ENCODE measurements at regions of chr4 and their contacts with region 1.

Region 1: DNA sequence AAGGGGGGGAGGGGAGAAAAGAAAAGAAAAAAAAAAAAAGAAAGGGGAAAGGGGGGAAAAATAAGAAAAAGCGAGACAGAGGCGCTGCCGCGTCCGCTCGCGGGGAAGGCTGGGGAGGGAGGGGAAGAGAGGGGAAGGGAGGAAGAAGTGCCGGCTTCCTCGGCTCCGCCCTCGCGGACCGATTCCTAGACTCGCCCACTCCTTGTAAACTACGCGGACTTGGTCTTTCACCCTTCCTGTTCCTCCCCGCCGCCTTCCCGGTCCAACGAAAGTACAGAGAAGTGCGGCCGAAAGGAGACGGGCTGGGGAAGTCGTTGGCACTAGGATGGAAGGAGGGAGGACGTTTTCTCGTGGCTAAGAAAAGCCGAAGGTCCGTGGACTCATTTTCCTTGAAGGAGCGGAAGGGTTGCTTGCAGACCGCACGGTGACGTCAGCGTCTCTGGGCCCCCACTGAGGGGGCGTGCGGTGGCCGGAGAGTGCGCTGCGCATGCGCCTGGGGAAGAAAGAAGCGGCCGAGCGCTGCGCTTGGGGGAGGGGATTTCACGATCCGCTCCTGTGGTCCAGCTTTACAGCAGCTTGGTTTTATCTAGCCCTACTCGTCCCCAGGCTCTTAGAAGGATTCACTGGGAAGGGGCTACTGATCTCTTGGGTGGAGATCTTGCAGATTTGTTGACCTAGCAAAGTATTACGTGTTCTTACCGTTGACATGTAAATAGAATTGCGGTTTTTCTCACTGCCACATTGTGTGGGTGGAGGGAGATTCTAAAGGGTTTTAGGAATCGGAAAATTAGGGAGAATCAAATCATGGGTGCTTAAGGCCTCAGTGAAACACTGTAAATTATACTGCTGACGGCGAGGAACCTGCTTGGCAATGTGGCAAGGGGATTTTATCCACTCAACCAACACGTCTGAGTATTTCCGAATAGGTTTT is at the start of gene CCNI:
- DNase-seq: peak; percentile 94
- H3K4me3 Mint-ChIP-seq: no peak within 1 kb of the TSS
- H3K27ac Mint-ChIP-seq: peak within 1 kb of the TSS; percentile 99
- H3K4me1 Mint-ChIP-seq: peaks cover 40% of the 10 kb centered on the region
- H3K27me3 Mint-ChIP-seq: peaks cover 3% of the 10 kb centered on the region
- total RNA-seq, gene CCNI: 244 to 246 TPM

Region 2: DNA sequence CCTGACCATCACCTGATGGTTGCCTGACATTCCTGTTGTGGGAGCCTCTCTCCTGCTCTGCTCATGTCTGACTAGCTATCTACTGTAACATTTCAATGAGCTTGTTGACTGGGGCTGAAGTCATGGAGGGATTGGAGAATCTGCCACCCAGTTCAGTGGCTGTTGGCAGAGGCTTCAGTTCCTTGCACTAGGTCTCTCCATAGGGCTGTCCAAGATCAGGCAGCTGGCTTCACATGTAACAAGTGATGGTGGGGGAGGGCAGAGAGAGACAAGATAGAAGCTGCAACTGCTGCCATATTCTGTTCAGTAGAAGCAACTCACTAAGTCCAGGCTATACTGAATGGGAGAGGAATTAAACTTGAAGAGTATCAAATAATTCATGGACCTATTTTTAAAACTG is 13.7 kb after region 1 on chr4:
- CTCF ChIA-PET with region 1: interaction called, 18 read pairs
- POLR2A ChIA-PET with region 1: interaction called, 12 read pairs
- DNase-seq: no peak
- H3K4me3 Mint-ChIP-seq: no peak overlapping the region
- H3K27ac Mint-ChIP-seq: no peak overlapping the region
- H3K4me1 Mint-ChIP-seq: peaks cover 5% of the 10 kb centered on the region
- H3K27me3 Mint-ChIP-seq: no peaks in the 10 kb centered on the region

Region 3: DNA sequence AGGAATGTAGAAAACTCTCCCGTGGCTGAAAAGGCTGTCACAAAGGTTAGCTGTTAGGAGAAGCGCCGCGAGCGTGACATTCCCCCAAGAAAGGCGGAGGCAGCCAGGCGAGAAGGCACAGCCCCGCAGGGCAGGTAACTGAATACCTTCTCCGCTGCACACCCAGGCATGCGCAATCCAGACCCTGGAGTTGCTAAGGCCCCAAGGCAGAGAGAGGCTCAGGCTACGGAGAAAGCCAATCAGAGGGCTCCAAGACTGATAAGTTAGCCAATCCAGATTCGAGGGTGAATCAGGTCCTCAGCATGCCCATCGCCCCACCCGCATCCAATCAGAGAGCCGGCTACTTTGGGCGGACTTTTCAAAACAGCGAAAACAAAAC is 80.4 kb after region 1 on chr4:
- CTCF ChIA-PET with region 1: interaction called, 7 read pairs
- POLR2A ChIA-PET with region 1: interaction called, 79 read pairs
- DNase-seq: peak; percentile 97
- H3K4me3 Mint-ChIP-seq: peak overlapping the region; percentile 98
- H3K27ac Mint-ChIP-seq: peak overlapping the region; percentile 90
- H3K4me1 Mint-ChIP-seq: peaks cover 43% of the 10 kb centered on the region
- H3K27me3 Mint-ChIP-seq: no peaks in the 10 kb centered on the region

Region 4: DNA sequence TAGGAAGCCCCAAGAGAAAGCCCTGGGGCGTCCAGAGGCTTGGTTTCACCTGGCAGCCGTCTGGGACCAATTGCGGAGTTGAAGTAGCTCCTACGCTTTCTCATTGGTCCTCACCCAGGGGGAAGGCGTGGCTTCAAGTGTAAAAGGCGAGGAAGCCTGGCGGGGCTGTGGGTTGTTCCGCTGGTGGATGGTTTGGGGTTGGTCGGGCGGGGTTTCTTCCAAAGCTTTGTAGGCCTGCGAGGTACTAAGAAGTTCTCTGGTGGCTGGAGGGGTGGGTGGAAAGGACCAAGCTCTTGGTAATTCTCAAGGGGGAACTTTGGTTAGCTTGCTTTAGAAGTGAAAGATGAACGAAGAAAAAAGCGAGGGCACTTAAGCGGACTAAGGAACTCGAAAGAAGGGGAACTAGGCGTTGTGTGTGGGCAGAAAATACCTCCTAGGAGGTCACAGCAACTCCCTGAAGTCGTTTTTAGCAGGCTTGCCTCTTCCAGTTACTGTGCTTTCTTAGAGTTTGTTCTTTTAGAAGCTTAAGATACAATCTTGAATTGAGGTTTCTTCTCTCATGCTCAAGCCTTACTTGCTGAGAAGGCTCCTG is 117.5 kb after region 1 on chr4:
- CTCF ChIA-PET with region 1: no interaction called
- POLR2A ChIA-PET with region 1: interaction called, 11 read pairs
- DNase-seq: peak; percentile 73
- H3K4me3 Mint-ChIP-seq: peak overlapping the region; percentile 77
- H3K27ac Mint-ChIP-seq: peak overlapping the region; percentile 78
- H3K4me1 Mint-ChIP-seq: peaks cover 19% of the 10 kb centered on the region
- H3K27me3 Mint-ChIP-seq: peaks cover 5% of the 10 kb centered on the region